SK-N-SH (cell line): ENCODE measurements at regions of chr10 and their contacts with region 1.

Region 1: DNA sequence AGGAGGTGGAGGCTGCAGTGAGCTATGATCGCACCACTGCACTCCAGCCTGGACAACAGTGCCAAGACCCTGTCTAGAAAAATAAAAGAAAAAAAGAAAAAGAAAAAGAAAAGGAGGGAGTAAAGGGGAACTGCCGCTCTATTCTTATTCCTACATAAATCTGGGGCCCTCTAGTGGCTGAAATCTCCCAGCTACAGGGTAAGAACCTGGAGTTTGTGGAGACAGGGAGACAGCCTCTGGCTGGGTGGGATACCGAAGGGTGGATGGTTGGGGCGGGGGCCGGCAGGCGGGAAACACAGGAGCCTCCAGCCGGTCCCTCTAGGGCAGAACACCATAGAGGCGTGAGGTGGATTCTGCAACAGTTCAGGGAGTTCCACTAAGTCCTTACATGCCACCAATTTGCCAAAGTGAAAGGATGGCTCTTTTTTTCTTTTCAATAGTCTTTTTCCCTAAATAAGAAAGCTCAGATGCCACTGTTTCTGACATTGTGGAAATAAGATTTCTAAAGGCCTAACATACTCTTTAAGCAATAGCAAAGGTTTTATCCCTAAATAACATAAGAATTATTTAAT is 117.3 kb downstream of the SVIL start:
- DNase-seq: peak; percentile 71
- H3K4me3 ChIP-seq: no peak overlapping the region
- H3K27ac ChIP-seq: no peak overlapping the region
- H3K4me1 ChIP-seq: peaks cover 0 to 3% of the 10 kb centered on the region in 2 experiments; a peak in 1 of 4 replicates
- H3K27me3 ChIP-seq: no peaks in the 10 kb centered on the region
- CTCF ChIP-seq: peak; percentile 71
- EP300 ChIP-seq: no peak
- RAD21 ChIP-seq: peak; percentile 21

Region 2: DNA sequence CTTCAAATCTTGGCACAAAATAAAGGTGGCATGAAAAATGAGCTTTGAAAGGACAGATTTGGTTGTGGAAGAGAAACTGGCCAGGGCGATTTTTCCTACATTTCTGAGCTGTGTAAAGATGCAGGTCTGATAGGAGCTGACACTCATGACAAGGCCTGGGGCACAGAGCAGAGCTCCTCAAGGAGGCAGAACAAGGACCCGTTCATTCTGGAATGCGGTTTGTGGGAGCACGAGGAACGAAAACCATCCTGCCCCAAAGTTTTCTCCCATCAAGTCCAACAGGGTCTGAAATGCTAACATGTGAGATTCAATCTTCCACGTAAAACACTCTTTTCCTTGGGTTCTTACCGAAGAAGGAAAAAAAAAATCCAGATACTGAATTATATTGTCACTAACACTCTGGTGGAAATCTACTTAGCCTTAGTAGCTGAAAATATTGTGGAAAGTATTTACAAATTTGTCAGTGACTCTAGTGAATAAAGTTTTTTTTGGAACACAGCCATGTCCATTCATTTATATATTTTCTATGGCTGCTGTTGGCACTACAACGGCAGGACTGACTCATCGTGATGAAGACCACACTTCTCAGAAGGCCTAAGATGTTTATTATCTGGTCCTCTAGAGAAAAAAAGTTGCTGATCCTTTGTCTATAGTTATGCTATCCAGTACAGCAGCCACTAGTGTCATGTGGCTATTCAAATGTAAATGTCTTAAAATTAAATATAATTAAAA is 624.5 kb before region 1 on chr10:
- CTCF ChIA-PET with region 1: no interaction called
- POLR2A ChIA-PET with region 1: no interaction called
- DNase-seq: no peak
- H3K4me3 ChIP-seq: no peak overlapping the region
- H3K27ac ChIP-seq: peak overlapping the region in 1 of 2 experiments; percentile 33; a peak in 1 of 4 replicates
- H3K4me1 ChIP-seq: 0 out of 4 replicates have a peak, but pooled peaks cover 0 to 8% of the 10 kb centered on the region in 2 experiments
- H3K27me3 ChIP-seq: no peaks in the 10 kb centered on the region
- CTCF ChIP-seq: no peak
- EP300 ChIP-seq: no peak
- RAD21 ChIP-seq: no peak

Region 3: GRCh38 chr10:29501692-29502091 is 15.7 kb before region 1 on chr10:
- CTCF ChIA-PET with region 1: interaction called, 26 read pairs
- POLR2A ChIA-PET with region 1: no interaction called
- DNase-seq: no peak
- H3K4me3 ChIP-seq: no peak overlapping the region
- H3K27ac ChIP-seq: peak overlapping the region in 1 of 2 experiments; percentile 45; a peak in 2 of 4 replicates
- H3K4me1 ChIP-seq: no peaks in the 10 kb centered on the region
- H3K27me3 ChIP-seq: no peaks in the 10 kb centered on the region
- CTCF ChIP-seq: no peak
- EP300 ChIP-seq: peak in 1 of 2 experiments; percentile 38; a peak in 2 of 4 replicates
- RAD21 ChIP-seq: no peak

Region 4: DNA sequence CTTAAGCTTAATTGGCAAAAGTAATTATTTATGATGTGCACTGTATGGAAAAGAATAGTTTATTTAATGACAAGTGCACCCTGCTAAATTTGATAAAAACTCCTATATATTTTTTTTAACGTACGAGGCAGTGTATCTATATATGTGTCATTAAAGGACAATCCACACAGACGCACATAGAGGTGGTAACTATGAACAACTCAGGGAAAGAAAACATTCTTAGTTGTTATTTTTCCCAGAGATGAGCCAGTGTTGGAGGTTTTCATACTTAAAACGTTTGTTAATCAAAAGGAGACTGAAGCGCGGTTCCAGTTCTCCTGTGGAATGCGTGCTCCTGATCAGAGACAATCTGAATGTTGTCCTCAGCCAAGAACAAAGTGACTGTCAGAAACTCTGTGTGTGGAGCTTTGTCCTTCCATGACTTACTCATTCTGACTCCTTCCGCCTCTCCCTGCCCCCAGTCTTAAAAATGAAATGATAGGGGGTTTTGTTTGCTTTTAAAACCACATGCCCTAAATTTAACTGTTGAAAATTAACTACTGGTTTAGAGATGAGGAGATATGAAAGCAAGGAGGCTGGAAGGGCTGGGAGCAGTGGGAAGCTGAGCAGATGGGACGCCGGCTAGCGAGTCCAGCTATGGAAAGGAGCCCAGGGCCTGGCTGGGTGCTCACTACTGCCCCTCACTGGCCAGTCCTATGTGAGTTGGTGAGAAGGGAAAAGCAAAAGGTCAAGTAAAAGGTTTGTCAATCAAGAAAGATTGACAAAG is 17.8 kb after region 1 on chr10:
- CTCF ChIA-PET with region 1: interaction called, 25 read pairs
- POLR2A ChIA-PET with region 1: no interaction called
- DNase-seq: peak; percentile 71
- H3K4me3 ChIP-seq: peak overlapping the region; percentile 10 to 46; a peak in 3 of 4 replicates
- H3K27ac ChIP-seq: peak overlapping the region; percentile 61 to 79
- H3K4me1 ChIP-seq: peaks cover 8 to 19% of the 10 kb centered on the region in 2 experiments
- H3K27me3 ChIP-seq: no peaks in the 10 kb centered on the region
- CTCF ChIP-seq: peak; percentile 98
- EP300 ChIP-seq: peak in 1 of 2 experiments; percentile 63; a peak in 1 of 4 replicates
- RAD21 ChIP-seq: no peak